GM12878 (cell line): ENCODE measurements at regions of chr5 and their contacts with region 1.

Region 1: GRCh38 chr5:107294211-107294550 is 376.6 kb downstream of the EFNA5 start:
- DNase-seq: peak; percentile 66
- ATAC-seq: peak; percentile 69
- H3K4me3 ChIP-seq: no peak overlapping the region
- H3K27ac ChIP-seq: no peak overlapping the region
- H3K4me1 ChIP-seq: peaks cover 20% of the 10 kb centered on the region
- H3K27me3 ChIP-seq: no peaks in the 10 kb centered on the region
- CTCF ChIP-seq: no peak
- EP300 ChIP-seq: peak; percentile 66 to 96; a peak in 3 of 4 replicates
- POLR2A ChIP-seq: no peak
- RAD21 ChIP-seq: no peak

Region 2: GRCh38 chr5:107263387-107264018 is 30.7 kb before region 1 on chr5:
- CTCF ChIA-PET with region 1: interaction called, 8 read pairs
- POLR2A ChIA-PET with region 1: interaction called, 6 read pairs
- RAD21 ChIA-PET with region 1: interaction called, 17 read pairs
- SMC1A ChIA-PET with region 1: interaction called, 23 read pairs
- in situ Hi-C with region 1: no loop called
- intact Hi-C with region 1: loop called (anchors 2 kb)
- DNase-seq: peak; percentile 73
- ATAC-seq: peak; percentile 87
- H3K4me3 ChIP-seq: no peak overlapping the region; the same call in 1 of the 2 replicates
- H3K27ac ChIP-seq: no peak overlapping the region
- H3K4me1 ChIP-seq: peaks cover 15% of the 10 kb centered on the region; the same call in 1 of the 2 replicates
- H3K27me3 ChIP-seq: no peaks in the 10 kb centered on the region
- CTCF ChIP-seq: no peak
- EP300 ChIP-seq: peak in 1 of 2 experiments; percentile 65; a peak in 1 of 4 replicates
- POLR2A ChIP-seq: no peak
- RAD21 ChIP-seq: no peak